CD4-positive, alpha-beta memory T cell (primary cell): ENCODE measurements at regions of chr11 and their contacts with region 1.

Region 1: GRCh38 chr11:57667736-57668435 is at the start of gene ZDHHC5:
- DNase-seq: peak; percentile 99 to 100 (median 100)
- H3K4me3 ChIP-seq: peak within 1 kb of the TSS; percentile 75 to 93
- H3K4me3 Mint-ChIP-seq: peak within 1 kb of the TSS; percentile 88 to 99 (median 96)
- H3K27ac ChIP-seq: peak within 1 kb of the TSS; percentile 91
- H3K27ac Mint-ChIP-seq: peak within 1 kb of the TSS; percentile 98 to 100 (median 99)
- H3K4me1 ChIP-seq: peaks cover 46% of the 10 kb centered on the region
- H3K4me1 Mint-ChIP-seq: peaks cover 33 to 67% (median 45%) of the 10 kb centered on the region in 4 donors
- H3K27me3 ChIP-seq: no peaks in the 10 kb centered on the region
- H3K27me3 Mint-ChIP-seq: peaks cover 0 to 5% of the 10 kb centered on the region in 2 donors
- total RNA-seq, gene ZDHHC5: 73.2 to 75.8 TPM

Region 2: GRCh38 chr11:57324886-57325734 is 342.8 kb before region 1 on chr11 and contains the start of gene TNKS1BP1:
- CTCF ChIA-PET with region 1: no interaction called
- POLR2A ChIA-PET with region 1: interaction called, 3 read pairs
- intact Hi-C with region 1: loop called (anchors 5 kb)
- DNase-seq: peak; percentile 90 to 92 (median 91)
- H3K4me3 ChIP-seq: peak within 1 kb of the TSS; percentile 59 to 64
- H3K4me3 Mint-ChIP-seq: peak within 1 kb of the TSS; percentile 88 to 99 (median 94)
- H3K27ac ChIP-seq: peak within 1 kb of the TSS; percentile 59
- H3K27ac Mint-ChIP-seq: peak within 1 kb of the TSS; percentile 95 to 99 (median 97)
- H3K4me1 ChIP-seq: peaks cover 33% of the 10 kb centered on the region
- H3K4me1 Mint-ChIP-seq: peaks cover 28 to 62% (median 37%) of the 10 kb centered on the region in 4 donors
- H3K27me3 ChIP-seq: no peaks in the 10 kb centered on the region
- H3K27me3 Mint-ChIP-seq: no peaks in the 10 kb centered on the region
- total RNA-seq, gene TNKS1BP1: 17.2 to 23.7 TPM

Region 3: DNA sequence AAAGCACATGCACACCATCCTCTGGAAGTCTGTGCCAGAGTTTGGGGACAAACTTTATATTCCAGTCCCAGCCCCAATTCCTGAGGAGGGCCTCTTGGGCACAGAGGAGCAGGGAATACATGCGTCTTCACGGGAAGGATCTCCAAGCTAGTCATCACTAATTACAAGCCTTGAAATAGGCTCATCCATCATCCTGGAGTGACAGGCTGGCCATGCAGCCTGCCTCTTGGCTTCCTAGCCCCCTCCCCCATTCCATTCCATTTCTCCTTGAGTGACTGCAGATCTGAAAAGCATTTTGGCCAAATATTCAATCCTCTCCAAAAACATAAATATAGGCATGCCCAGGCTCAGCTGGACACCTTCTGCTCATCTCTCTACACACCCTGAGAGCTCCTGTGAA is 45.6 kb before region 1 on chr11:
- CTCF ChIA-PET with region 1: no interaction called
- POLR2A ChIA-PET with region 1: no interaction called
- intact Hi-C with region 1: no loop called
- DNase-seq: no peak
- H3K4me3 ChIP-seq: no peak overlapping the region
- H3K4me3 Mint-ChIP-seq: no peak overlapping the region
- H3K27ac ChIP-seq: no peak overlapping the region
- H3K27ac Mint-ChIP-seq: no peak overlapping the region
- H3K4me1 ChIP-seq: no peaks in the 10 kb centered on the region
- H3K4me1 Mint-ChIP-seq: no peaks in the 10 kb centered on the region
- H3K27me3 ChIP-seq: no peaks in the 10 kb centered on the region
- H3K27me3 Mint-ChIP-seq: peaks cover 2 to 5% of the 10 kb centered on the region in 2 donors

Region 4: GRCh38 chr11:57644748-57645688 is 22.9 kb before region 1 on chr11:
- CTCF ChIA-PET with region 1: interaction called, 17 read pairs
- POLR2A ChIA-PET with region 1: interaction called, 8 read pairs
- intact Hi-C with region 1: loop called (anchors 1 kb)
- DNase-seq: peak; percentile 82 to 89 (median 86)
- H3K4me3 ChIP-seq: no peak overlapping the region
- H3K4me3 Mint-ChIP-seq: peak overlapping the region in 1 of 8 donors; percentile 67
- H3K27ac ChIP-seq: no peak overlapping the region
- H3K27ac Mint-ChIP-seq: peak overlapping the region in 2 of 7 donors; percentile 62 to 69
- H3K4me1 ChIP-seq: peaks cover 17% of the 10 kb centered on the region
- H3K4me1 Mint-ChIP-seq: peaks cover 18 to 38% (median 28%) of the 10 kb centered on the region in 4 donors
- H3K27me3 ChIP-seq: peaks cover 37% of the 10 kb centered on the region
- H3K27me3 Mint-ChIP-seq: peaks cover 31 to 50% of the 10 kb centered on the region in 2 donors

Region 5: DNA sequence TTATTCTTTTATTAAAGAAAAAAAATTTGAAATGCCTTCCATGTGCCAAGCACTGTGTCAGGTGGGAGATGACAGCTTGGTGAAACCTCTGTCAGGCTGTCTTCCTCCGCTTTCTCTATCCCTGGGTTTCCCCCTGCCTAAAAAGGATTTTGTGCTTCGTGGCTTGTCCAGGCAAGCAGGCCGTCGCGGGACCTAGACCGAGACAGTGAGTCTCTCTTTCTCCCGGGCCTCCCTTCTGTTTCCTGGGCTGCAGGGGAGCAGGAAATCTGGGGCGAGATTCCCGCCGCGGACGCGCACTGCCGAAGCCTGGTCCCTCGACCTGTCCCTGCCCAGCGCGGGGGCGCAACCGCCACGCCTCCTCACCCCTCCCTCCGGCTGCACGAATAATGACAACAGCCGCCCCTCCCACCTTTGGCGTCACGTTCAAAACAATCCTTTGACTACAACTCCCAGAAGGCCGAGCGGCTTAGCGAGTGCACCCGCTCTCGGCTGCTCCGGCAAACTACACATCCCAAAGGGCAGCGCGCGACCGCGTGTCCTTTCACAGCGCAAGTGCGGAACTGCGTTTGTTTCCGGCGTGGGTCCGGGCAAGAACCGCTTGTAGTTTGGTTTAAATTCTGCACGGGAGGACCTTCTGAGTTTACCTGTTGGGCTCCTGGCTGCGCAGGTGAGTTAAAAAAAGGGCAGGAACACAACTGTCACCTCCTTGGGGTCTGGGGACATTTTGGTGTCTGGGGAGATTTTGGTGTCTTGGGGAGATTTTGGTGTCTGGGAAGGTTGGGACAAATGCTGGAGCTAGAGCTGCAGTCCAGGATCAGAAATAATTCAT is 10.5 kb before region 1 on chr11 and contains the start of gene CLP1:
- CTCF ChIA-PET with region 1: interaction called, 4 read pairs
- POLR2A ChIA-PET with region 1: interaction called, 33 read pairs
- intact Hi-C with region 1: loop called (anchors 1 kb)
- DNase-seq: peak; percentile 98 to 99 (median 98)
- H3K4me3 ChIP-seq: peak within 1 kb of the TSS; percentile 91 to 96
- H3K4me3 Mint-ChIP-seq: peak within 1 kb of the TSS; percentile 94 to 100 (median 98)
- H3K27ac ChIP-seq: peak within 1 kb of the TSS; percentile 84
- H3K27ac Mint-ChIP-seq: peak within 1 kb of the TSS; percentile 86 to 100 (median 97)
- H3K4me1 ChIP-seq: peaks cover 16% of the 10 kb centered on the region
- H3K4me1 Mint-ChIP-seq: peaks cover 15 to 30% (median 27%) of the 10 kb centered on the region in 4 donors
- H3K27me3 ChIP-seq: no peaks in the 10 kb centered on the region
- H3K27me3 Mint-ChIP-seq: no peaks in the 10 kb centered on the region
- total RNA-seq, gene CLP1: 14.1 to 16.0 TPM

Region 6: GRCh38 chr11:57741132-57742086 is 73.5 kb after region 1 on chr11 and contains the start of gene SELENOH:
- CTCF ChIA-PET with region 1: no interaction called
- POLR2A ChIA-PET with region 1: interaction called, 21 read pairs
- intact Hi-C with region 1: loop called (anchors 1 kb)
- DNase-seq: peak; percentile 90 to 96 (median 91)
- H3K4me3 ChIP-seq: peak within 1 kb of the TSS; percentile 77 to 80
- H3K4me3 Mint-ChIP-seq: peak within 1 kb of the TSS; percentile 90 to 100 (median 98)
- H3K27ac ChIP-seq: peak within 1 kb of the TSS; percentile 82
- H3K27ac Mint-ChIP-seq: peak within 1 kb of the TSS; percentile 96 to 100 (median 99)
- H3K4me1 ChIP-seq: peaks cover 26% of the 10 kb centered on the region
- H3K4me1 Mint-ChIP-seq: peaks cover 18 to 36% (median 28%) of the 10 kb centered on the region in 4 donors
- H3K27me3 ChIP-seq: no peaks in the 10 kb centered on the region
- H3K27me3 Mint-ChIP-seq: no peaks in the 10 kb centered on the region
- total RNA-seq, gene SELENOH: 102 to 113 TPM

Region 7: GRCh38 chr11:59142530-59143507 is 1474.9 kb after region 1 on chr11 and contains the start of gene FAM111A:
- CTCF ChIA-PET with region 1: no interaction called
- POLR2A ChIA-PET with region 1: no interaction called
- intact Hi-C with region 1: loop called (anchors 5 kb)
- DNase-seq: peak; percentile 89 to 94 (median 90)
- H3K4me3 ChIP-seq: peak within 1 kb of the TSS; percentile 86 to 92
- H3K4me3 Mint-ChIP-seq: peak within 1 kb of the TSS; percentile 94 to 98 (median 97)
- H3K27ac ChIP-seq: peak within 1 kb of the TSS; percentile 87
- H3K27ac Mint-ChIP-seq: peak within 1 kb of the TSS; percentile 96 to 99 (median 98)
- H3K4me1 ChIP-seq: peaks cover 46% of the 10 kb centered on the region
- H3K4me1 Mint-ChIP-seq: peaks cover 39 to 60% (median 43%) of the 10 kb centered on the region in 4 donors
- H3K27me3 ChIP-seq: no peaks in the 10 kb centered on the region
- H3K27me3 Mint-ChIP-seq: no peaks in the 10 kb centered on the region
- total RNA-seq, gene FAM111A: 128 to 130 TPM